HCT116 (cell line): ENCODE measurements at regions of chr14 and their contacts with region 1.

Region 1: GRCh38 chr14:24093901-24094761 is at the start of gene PCK2:
- DNase-seq: peak; percentile 85
- ATAC-seq: peak; percentile 91
- H3K4me3 ChIP-seq: peak within 1 kb of the TSS; percentile 94 to 96
- H3K27ac ChIP-seq: peak within 1 kb of the TSS; percentile 87
- H3K4me1 ChIP-seq: peaks cover 15 to 22% of the 10 kb centered on the region in 2 experiments
- H3K27me3 ChIP-seq: no peaks in the 10 kb centered on the region
- CTCF ChIP-seq: no peak
- POLR2A ChIP-seq: peak; percentile 98
- RAD21 ChIP-seq: no peak
- total RNA-seq, gene PCK2: 94.1 TPM

Region 2: DNA sequence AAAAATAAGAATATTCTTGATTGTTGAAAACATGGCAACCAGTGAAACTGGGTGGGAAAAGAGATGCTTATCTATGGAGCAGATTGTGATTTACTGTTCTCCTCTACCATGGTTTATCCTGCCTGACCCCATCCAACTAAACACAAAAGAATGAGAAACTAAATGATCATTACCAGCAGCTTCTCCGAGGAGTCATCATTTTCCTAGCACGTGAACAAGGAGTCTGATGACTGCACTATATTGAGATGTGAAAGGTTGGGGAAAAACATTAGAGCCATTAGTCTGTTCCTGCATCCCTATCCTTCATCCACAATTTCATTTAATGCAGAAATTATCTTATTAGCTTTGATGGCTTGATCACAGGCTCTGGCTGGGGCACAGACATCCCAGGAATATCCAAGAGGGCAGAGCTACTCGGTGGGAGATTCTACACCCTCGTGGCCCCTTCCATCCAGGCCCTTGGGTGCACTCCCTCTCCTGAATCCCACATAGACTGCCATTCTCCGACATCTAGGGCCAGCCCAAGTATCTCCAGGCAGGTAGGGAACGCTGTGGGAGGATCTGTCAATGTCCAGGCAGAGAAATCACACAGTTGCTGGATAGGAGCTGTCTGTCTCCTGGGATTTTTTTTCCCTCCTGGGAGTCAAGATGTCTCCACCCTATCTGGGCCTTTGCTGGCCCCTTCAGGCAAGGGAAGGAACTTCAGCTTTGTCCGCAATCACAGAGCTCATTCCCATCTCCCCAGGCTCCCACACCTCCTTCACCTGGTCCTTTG is 183.8 kb before region 1 on chr14:
- CTCF ChIA-PET with region 1: no interaction called
- POLR2A ChIA-PET with region 1: no interaction called
- RAD21 ChIA-PET with region 1: no interaction called
- intact Hi-C with region 1: no loop called
- DNase-seq: peak; percentile 38
- ATAC-seq: peak; percentile 98
- H3K4me3 ChIP-seq: no peak overlapping the region
- H3K27ac ChIP-seq: no peak overlapping the region
- H3K4me1 ChIP-seq: no peaks in the 10 kb centered on the region
- H3K27me3 ChIP-seq: no peaks in the 10 kb centered on the region
- CTCF ChIP-seq: peak; percentile 83 to 93 (median 85)
- POLR2A ChIP-seq: no peak
- RAD21 ChIP-seq: peak; percentile 85

Region 3: DNA sequence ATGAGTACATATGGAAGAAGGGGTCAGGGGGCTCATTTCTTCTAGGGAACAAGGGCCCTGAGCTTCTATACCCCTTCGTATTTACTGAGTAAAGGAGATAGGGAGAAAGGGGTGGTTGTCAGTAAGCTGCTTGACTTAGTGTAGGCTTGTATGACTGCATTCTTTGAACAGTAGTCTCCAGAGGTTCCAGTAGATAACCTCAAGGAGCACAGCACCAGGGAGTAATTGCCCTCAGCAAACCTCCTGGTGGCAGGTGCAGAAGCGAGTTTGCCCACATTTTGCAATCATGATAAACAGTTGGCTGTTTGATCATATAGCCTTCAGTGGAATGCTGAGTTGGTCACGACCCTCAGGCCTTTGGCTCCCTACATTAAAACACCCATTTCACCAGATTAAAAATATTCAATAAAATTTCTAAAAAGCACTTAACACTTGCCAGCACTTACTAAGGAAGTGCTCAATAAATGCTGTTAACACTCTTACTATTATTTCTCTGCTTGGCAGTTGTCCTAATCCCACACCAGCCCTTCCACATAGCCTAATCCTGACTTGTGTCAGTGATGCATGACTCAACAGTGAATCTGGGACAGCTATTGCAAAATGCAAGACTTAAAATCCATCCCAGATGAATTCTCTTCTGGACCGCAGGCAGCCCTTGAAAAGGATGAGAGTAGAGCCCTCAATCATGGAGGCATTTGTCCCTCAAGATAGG is 109.1 kb before region 1 on chr14:
- CTCF ChIA-PET with region 1: no interaction called
- POLR2A ChIA-PET with region 1: interaction called, 5 read pairs
- RAD21 ChIA-PET with region 1: no interaction called
- intact Hi-C with region 1: loop called (anchors 10 kb)
- DNase-seq: no peak
- ATAC-seq: no peak
- H3K4me3 ChIP-seq: no peak overlapping the region
- H3K27ac ChIP-seq: no peak overlapping the region
- H3K4me1 ChIP-seq: peaks cover 3 to 19% of the 10 kb centered on the region in 2 experiments; a peak in 3 of 4 replicates
- H3K27me3 ChIP-seq: no peaks in the 10 kb centered on the region
- CTCF ChIP-seq: no peak
- POLR2A ChIP-seq: no peak
- RAD21 ChIP-seq: no peak

Region 4: GRCh38 chr14:24080888-24081738 is 13.0 kb before region 1 on chr14:
- CTCF ChIA-PET with region 1: interaction called, 42 read pairs
- POLR2A ChIA-PET with region 1: interaction called, 26 read pairs
- RAD21 ChIA-PET with region 1: no interaction called
- intact Hi-C with region 1: no loop called
- DNase-seq: no peak
- ATAC-seq: peak; percentile 93
- H3K4me3 ChIP-seq: peak overlapping the region; percentile 57 to 68
- H3K27ac ChIP-seq: peak overlapping the region; percentile 97
- H3K4me1 ChIP-seq: peaks cover 18 to 27% of the 10 kb centered on the region in 2 experiments
- H3K27me3 ChIP-seq: no peaks in the 10 kb centered on the region
- CTCF ChIP-seq: no peak
- POLR2A ChIP-seq: peak; percentile 79
- RAD21 ChIP-seq: no peak

Region 5: GRCh38 chr14:24114536-24115450 is 20.7 kb after region 1 on chr14 and contains the starts of genes DCAF11 and NRL:
- CTCF ChIA-PET with region 1: interaction called, 73 read pairs
- POLR2A ChIA-PET with region 1: interaction called, 49 read pairs
- RAD21 ChIA-PET with region 1: no interaction called
- intact Hi-C with region 1: loop called (anchors 1 kb)
- DNase-seq: peak; percentile 100
- ATAC-seq: peak; percentile 89
- H3K4me3 ChIP-seq: peak within 1 kb of the TSS; percentile 86 to 92
- H3K27ac ChIP-seq: peak within 1 kb of the TSS; percentile 97
- H3K4me1 ChIP-seq: peaks cover 6 to 16% of the 10 kb centered on the region in 2 experiments; a peak in 3 of 4 replicates
- H3K27me3 ChIP-seq: no peaks in the 10 kb centered on the region
- CTCF ChIP-seq: no peak
- POLR2A ChIP-seq: peak; percentile 2
- RAD21 ChIP-seq: no peak
- total RNA-seq, gene DCAF11: 47.5 TPM
- total RNA-seq, gene NRL: 0.66 TPM

Region 6: DNA sequence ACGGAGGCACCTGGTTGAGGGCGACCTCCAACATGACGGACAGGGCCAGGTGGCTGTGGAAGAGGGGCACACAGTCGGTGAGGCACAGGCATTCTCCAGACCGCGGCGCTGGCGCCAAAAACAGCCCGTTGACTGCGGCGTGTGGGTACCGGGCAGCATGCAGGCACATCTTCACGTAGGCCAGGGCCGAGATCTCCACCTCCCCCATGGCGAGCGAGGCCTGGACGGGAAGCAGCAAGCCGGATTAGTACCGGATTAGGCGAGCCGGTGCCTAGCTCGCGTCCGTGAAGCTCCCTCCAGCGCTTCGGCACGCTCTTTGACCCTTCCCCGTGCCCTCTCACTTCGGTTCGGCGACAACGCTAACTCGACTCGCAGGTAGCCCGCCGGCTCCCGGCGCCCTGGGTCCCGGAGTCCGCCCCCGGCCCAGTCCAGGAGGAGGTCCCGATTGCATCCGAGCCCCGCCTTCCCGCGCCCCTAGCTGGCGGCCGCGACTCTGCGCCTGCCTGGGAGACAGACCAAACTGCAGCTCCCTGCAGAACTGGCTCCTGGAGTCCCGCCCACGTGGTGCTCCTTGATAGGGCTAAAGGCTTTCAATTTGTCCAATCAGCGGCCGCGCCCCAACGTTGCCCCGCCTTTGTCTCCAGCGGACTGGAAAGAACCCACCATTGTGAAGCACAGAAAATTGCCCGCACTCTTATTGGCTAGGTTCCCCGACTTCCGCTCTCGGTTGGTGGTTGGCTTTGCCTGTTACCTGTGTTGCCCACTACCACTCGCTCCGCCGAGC is 47.2 kb after region 1 on chr14 and contains the start of gene EMC9:
- CTCF ChIA-PET with region 1: no interaction called
- POLR2A ChIA-PET with region 1: interaction called, 11 read pairs
- RAD21 ChIA-PET with region 1: no interaction called
- intact Hi-C with region 1: no loop called
- DNase-seq: peak; percentile 99
- ATAC-seq: peak; percentile 88
- H3K4me3 ChIP-seq: peak within 1 kb of the TSS; percentile 66 to 87
- H3K27ac ChIP-seq: peak within 1 kb of the TSS; percentile 91
- H3K4me1 ChIP-seq: peaks cover 26 to 50% of the 10 kb centered on the region in 2 experiments
- H3K27me3 ChIP-seq: no peaks in the 10 kb centered on the region
- CTCF ChIP-seq: peak in 1 of 3 experiments; percentile 62; a peak in 3 of 6 replicates
- POLR2A ChIP-seq: peak; percentile 96
- RAD21 ChIP-seq: no peak
- total RNA-seq, gene EMC9: 42.0 TPM